ENCODE measurements at regions of chr2 and their contacts with region 1.

Region 1: GRCh38 chr2:201795607-201796477 is 10.5 kb upstream of the CDK15 start:
- DNase-seq: peak; percentile 44
- H3K4me3 ChIP-seq: no peak overlapping the region
- H3K27ac ChIP-seq: no peak overlapping the region
- H3K4me1 ChIP-seq: peaks cover 14% of the 10 kb centered on the region
- H3K27me3 ChIP-seq: no peaks in the 10 kb centered on the region
- CTCF ChIP-seq: peak; percentile 71
- POLR2A ChIP-seq: no peak

Region 2: GRCh38 chr2:201420442-201421113 is 375.3 kb before region 1 on chr2:
- CTCF ChIA-PET with region 1: no interaction called
- POLR2A ChIA-PET with region 1: no interaction called
- dilution Hi-C with region 1: no loop called
- intact Hi-C with region 1: no loop called
- DNase-seq: peak; percentile 91
- H3K4me3 ChIP-seq: no peak overlapping the region
- H3K27ac ChIP-seq: peak overlapping the region; percentile 51
- H3K4me1 ChIP-seq: peaks cover 42% of the 10 kb centered on the region
- H3K27me3 ChIP-seq: no peaks in the 10 kb centered on the region
- CTCF ChIP-seq: no peak
- POLR2A ChIP-seq: no peak

Region 3: DNA sequence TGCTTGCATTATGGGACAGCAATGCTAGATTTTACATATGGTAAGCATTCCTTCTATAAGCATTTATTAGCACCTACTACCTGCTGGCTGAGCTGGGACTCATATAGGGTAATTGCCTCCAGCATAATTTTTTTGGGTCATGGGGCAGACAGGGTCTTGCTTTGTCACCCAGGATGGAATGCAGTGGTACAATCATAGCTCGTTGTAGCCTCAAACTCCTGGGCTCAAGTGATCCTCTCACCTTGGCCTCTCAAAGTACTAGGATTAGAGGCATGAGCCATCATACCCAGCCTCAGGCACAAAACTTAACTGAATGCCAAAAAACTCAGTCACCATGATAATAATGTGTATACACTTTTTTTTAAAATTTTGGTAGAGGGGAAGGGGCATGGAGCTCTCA is 187.8 kb before region 1 on chr2:
- CTCF ChIA-PET with region 1: no interaction called
- POLR2A ChIA-PET with region 1: no interaction called
- dilution Hi-C with region 1: no loop called
- intact Hi-C with region 1: no loop called
- DNase-seq: no peak
- H3K4me3 ChIP-seq: no peak overlapping the region
- H3K27ac ChIP-seq: no peak overlapping the region
- H3K4me1 ChIP-seq: no peaks in the 10 kb centered on the region
- H3K27me3 ChIP-seq: peaks cover 2 to 3% of the 10 kb centered on the region in 2 experiments
- CTCF ChIP-seq: no peak
- POLR2A ChIP-seq: no peak

Region 4: GRCh38 chr2:201839727-201840126 is 43.9 kb after region 1 on chr2:
- CTCF ChIA-PET with region 1: no interaction called
- POLR2A ChIA-PET with region 1: no interaction called
- dilution Hi-C with region 1: no loop called
- intact Hi-C with region 1: no loop called
- DNase-seq: no peak
- H3K4me3 ChIP-seq: no peak overlapping the region
- H3K27ac ChIP-seq: no peak overlapping the region
- H3K4me1 ChIP-seq: no peaks in the 10 kb centered on the region
- H3K27me3 ChIP-seq: peaks cover 0 to 8% of the 10 kb centered on the region in 2 experiments
- CTCF ChIP-seq: no peak
- POLR2A ChIP-seq: no peak

Region 5: DNA sequence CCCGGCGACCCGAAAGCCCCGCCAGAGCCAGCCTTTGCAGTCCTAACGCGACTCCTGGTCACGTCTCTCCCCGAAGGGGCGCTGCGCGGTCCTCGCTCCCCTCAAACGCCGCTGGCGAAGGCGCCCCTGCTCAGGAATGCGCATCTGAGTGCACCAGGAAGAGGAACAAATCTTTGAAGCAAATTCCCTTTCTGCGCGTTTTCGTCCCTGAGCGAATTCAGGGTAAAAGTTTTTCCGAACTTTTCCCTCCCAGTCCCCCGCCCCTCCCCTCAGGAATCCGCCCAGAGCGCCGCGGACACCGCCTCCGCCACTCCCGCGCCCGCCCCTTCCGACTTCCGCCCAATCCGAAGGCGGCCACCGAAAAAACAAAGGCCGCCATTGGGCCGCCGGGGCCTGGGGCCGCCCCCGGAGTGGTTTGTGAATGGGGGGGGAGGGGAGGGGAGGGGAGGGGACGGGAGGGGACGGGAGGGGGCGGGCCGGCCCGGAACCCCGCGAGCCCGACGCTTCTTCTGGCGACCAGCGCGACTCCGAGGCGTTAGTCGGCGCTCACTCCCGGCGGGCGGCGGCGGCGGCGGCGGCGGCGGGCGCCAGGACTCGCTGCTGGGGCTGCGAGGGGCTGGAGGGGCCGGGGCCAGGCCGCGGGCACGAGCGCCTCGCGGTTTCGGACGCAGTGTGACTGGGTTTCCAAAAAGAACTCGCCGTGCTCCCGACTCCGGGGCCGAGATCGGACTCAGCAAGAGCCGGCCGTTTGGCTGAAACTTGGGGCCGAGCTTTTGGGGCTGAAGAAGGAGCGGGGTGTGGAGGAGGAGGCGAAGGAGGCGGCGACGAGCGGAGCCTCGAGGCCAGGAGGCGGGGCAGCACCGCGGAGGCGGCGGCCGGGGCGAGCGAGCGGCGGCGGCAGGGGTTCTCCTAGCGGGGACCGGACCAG is 237.7 kb after region 1 on chr2 and contains the start of gene FZD7:
- CTCF ChIA-PET with region 1: no interaction called
- POLR2A ChIA-PET with region 1: no interaction called
- dilution Hi-C with region 1: no loop called
- intact Hi-C with region 1: loop called (anchors 10 kb)
- DNase-seq: peak; percentile 71
- H3K4me3 ChIP-seq: peak within 1 kb of the TSS; percentile 49 to 77 (median 62)
- H3K27ac ChIP-seq: no peak within 1 kb of the TSS
- H3K4me1 ChIP-seq: peaks cover 10% of the 10 kb centered on the region
- H3K27me3 ChIP-seq: peaks cover 64 to 81% of the 10 kb centered on the region in 2 experiments
- CTCF ChIP-seq: peak in 1 of 2 donors; percentile 18
- POLR2A ChIP-seq: no peak
- total RNA-seq, gene FZD7: 0.23 and 0.29 TPM in 2 replicates

Region 6: GRCh38 chr2:202064171-202064880 is 268.5 kb after region 1 on chr2:
- CTCF ChIA-PET with region 1: no interaction called
- POLR2A ChIA-PET with region 1: no interaction called
- dilution Hi-C with region 1: no loop called
- intact Hi-C with region 1: loop called (anchors 5 kb)
- DNase-seq: no peak
- H3K4me3 ChIP-seq: no peak overlapping the region
- H3K27ac ChIP-seq: no peak overlapping the region
- H3K4me1 ChIP-seq: no peaks in the 10 kb centered on the region
- H3K27me3 ChIP-seq: peaks cover 0 to 10% of the 10 kb centered on the region in 2 experiments
- CTCF ChIP-seq: no peak
- POLR2A ChIP-seq: no peak

Region 7: DNA sequence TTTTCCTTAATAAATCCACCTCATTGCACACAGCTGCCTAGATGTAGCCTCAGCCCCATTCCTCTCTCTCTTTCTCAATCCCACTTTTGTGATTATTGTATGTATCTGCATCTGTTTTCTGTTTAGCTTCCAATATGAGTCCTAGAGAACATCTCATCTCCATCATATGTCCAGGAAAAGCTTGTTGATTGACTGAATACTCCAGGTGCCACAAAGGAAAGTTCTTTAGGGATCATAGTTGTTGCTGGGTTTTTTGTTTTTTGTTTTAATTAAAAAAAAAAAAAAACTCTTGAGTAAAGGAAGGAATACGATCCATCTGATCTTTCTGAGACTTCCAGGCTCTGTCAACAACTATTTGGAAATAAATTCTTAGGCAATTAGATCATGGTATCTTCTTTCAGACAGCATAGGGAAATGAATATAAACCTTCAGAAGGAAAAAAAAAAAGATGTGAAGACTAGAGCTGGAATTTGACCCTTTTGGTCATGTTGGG is 319.7 kb after region 1 on chr2:
- CTCF ChIA-PET with region 1: no interaction called
- POLR2A ChIA-PET with region 1: no interaction called
- dilution Hi-C with region 1: no loop called
- intact Hi-C with region 1: loop called (anchors 5 kb)
- DNase-seq: no peak
- H3K4me3 ChIP-seq: no peak overlapping the region
- H3K27ac ChIP-seq: no peak overlapping the region
- H3K4me1 ChIP-seq: no peaks in the 10 kb centered on the region
- H3K27me3 ChIP-seq: peaks cover 9 to 18% of the 10 kb centered on the region in 2 experiments
- CTCF ChIP-seq: no peak
- POLR2A ChIP-seq: no peak